Breast epithelium (tissue), 4 donors: ENCODE measurements at regions of chr5 and their contacts with region 1.

Region 1: DNA sequence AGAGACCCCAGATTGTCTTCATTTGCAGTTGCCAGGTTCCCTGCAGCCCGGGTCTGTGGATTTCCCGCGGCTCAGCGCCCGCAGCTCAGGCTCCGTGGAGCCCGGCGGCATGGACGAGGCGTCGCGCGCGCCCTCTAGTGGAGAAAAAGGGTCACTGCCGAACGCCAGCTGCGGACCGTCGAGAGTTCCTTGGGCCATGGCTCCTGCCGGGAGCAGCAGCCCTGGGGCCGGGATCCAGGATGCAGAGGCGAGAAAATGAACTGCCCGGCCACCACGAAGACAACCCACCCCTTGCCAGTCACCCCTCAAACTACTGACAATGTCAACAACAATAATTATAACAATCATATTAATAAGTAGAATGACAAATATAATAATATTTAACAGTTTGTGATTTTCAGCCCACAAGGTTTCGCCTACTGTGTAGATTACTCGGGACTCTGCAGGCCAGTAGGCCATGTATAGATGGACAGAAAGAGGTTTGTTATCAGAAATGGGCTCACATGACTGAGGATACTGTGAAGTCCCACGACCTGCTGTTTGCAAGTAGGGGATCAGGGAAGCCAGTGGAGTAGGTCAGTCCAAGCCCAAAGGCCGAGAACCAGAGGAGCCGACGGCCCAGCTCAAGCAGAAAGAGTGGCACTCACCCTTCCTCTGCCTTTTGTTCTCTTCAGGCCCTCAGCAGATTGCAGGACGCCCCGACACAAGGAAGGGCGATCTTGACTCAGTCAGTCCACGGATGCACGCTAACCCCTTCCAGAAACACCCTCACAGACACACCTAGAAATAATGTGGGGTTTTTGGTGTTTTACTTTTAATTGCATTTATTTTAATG is 43.1 kb downstream of the BOD1 start:
- DNase-seq: peak; percentile 54 to 88
- H3K4me3 ChIP-seq: peak overlapping the region in 2 of 3 donors; percentile 19 to 54
- H3K27ac ChIP-seq: peak overlapping the region in 1 of 2 donors; percentile 23
- H3K4me1 ChIP-seq: peaks cover 0 to 7% of the 10 kb centered on the region in 2 donors
- H3K27me3 ChIP-seq: no peaks in the 10 kb centered on the region
- CTCF ChIP-seq: peak; percentile 92 to 97 (median 93)
- POLR2A ChIP-seq: no peak

Region 2: DNA sequence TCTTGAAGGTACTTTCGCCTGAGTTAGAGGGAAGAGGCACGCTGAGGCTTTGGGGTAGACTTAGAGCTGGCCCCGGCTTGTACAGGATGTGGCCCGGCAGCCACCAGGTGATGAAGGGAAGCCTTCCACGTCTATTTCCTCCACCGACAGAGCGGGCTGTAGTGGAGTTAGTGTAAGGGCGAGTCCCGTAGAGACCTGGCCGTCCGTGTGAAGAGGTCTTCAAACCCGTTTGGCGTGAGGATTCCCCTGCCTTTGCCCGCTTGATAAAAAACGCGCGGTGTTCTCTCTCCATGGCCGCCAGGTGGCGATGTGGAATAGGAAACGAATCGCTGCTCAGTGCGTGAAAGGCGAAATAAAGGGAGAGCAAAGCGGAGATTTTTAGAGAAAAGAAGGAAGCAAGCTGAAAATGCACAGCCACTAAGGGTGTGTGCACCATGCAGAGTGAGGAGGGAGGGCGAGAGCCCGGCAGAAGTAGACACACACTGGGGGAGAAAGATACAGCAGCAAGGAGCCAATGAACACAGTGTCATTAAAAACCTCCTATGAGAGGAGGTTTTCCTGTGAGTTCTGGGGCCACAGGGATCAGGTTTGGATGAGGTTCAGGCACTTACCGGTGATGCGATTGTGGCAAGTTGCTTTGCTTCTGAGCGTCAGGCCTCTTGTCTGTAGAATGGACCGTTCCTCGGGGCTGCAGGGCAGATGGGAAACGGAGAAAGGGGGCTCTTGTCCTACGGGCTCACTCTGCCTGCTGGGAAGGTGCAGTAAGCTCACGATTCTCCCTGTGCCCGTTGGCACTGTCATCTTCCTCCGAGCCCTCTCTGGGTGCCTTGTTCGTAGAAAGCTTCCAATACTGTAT is 279.3 kb before region 1 on chr5:
- intact Hi-C with region 1: loop called (anchors 10 kb)
- DNase-seq: peak; percentile 63 to 84
- H3K4me3 ChIP-seq: peak overlapping the region in 2 of 3 donors; percentile 31 to 52
- H3K27ac ChIP-seq: no peak overlapping the region
- H3K4me1 ChIP-seq: peaks cover 0 to 4% of the 10 kb centered on the region in 2 donors
- H3K27me3 ChIP-seq: no peaks in the 10 kb centered on the region
- CTCF ChIP-seq: peak; percentile 92 to 96 (median 95)
- POLR2A ChIP-seq: no peak

Region 3: DNA sequence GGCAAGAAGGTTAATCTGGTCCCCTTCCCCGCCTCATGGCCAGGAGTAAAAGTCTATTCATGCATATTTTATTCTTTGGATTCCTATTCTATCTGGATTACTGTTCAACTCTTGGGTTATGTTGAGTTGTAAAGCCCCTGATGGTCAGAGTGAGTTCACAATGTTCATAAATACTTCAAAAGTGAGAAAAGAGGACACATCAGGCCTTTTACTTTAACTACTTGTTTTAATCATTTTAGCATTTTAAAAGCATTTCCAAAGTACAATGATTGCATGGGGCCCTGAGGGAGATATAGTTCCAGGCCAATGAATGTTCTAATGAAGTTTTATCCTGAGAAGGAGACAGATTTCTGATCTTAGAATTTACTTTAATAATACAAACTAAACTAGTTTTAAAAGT is 50.8 kb before region 1 on chr5:
- intact Hi-C with region 1: no loop called
- DNase-seq: no peak
- H3K4me3 ChIP-seq: no peak overlapping the region
- H3K27ac ChIP-seq: no peak overlapping the region
- H3K4me1 ChIP-seq: no peaks in the 10 kb centered on the region
- H3K27me3 ChIP-seq: no peaks in the 10 kb centered on the region
- CTCF ChIP-seq: no peak
- POLR2A ChIP-seq: no peak